A673 (cell line): ENCODE measurements at regions of chr10 and their contacts with region 1.

Region 1: GRCh38 chr10:80205478-80206276 is at the start of gene ANXA11:
- DNase-seq: peak; percentile 92
- H3K4me3 ChIP-seq: peak within 1 kb of the TSS; percentile 93
- H3K27ac ChIP-seq: peak within 1 kb of the TSS; percentile 93
- H3K4me1 ChIP-seq: peaks cover 20% of the 10 kb centered on the region
- H3K27me3 ChIP-seq: no peaks in the 10 kb centered on the region
- CTCF ChIP-seq: no peak
- total RNA-seq, gene ANXA11: 118 and 119 TPM in 2 replicates

Region 2: GRCh38 chr10:80158598-80159127 is 47.0 kb before region 1 on chr10:
- CTCF ChIA-PET with region 1: no interaction called
- POLR2A ChIA-PET with region 1: no interaction called
- intact Hi-C with region 1: loop called (anchors 2 kb)
- DNase-seq: peak; percentile 99
- H3K4me3 ChIP-seq: no peak overlapping the region
- H3K27ac ChIP-seq: peak overlapping the region; percentile 88
- H3K4me1 ChIP-seq: peaks cover 37% of the 10 kb centered on the region
- H3K27me3 ChIP-seq: no peaks in the 10 kb centered on the region
- CTCF ChIP-seq: no peak

Region 3: GRCh38 chr10:80191589-80192255 is 14.0 kb before region 1 on chr10:
- CTCF ChIA-PET with region 1: no interaction called
- POLR2A ChIA-PET with region 1: no interaction called
- intact Hi-C with region 1: no loop called
- DNase-seq: no peak
- H3K4me3 ChIP-seq: no peak overlapping the region
- H3K27ac ChIP-seq: no peak overlapping the region
- H3K4me1 ChIP-seq: peaks cover 6% of the 10 kb centered on the region
- H3K27me3 ChIP-seq: no peaks in the 10 kb centered on the region
- CTCF ChIP-seq: no peak